Endothelial cell of umbilical vein (primary cell): ENCODE measurements at regions of chr1 and their contacts with region 1.

Region 1: GRCh38 chr1:12407050-12407961 is 177.5 kb downstream of the VPS13D start:
- DNase-seq: peak; percentile 91
- H3K4me3 ChIP-seq: no peak overlapping the region
- H3K27ac ChIP-seq: no peak overlapping the region
- H3K4me1 ChIP-seq: peaks cover 33% of the 10 kb centered on the region
- H3K27me3 ChIP-seq: no peaks in the 10 kb centered on the region
- CTCF ChIP-seq: peak; percentile 23 to 24
- POLR2A ChIP-seq: no peak

Region 2: DNA sequence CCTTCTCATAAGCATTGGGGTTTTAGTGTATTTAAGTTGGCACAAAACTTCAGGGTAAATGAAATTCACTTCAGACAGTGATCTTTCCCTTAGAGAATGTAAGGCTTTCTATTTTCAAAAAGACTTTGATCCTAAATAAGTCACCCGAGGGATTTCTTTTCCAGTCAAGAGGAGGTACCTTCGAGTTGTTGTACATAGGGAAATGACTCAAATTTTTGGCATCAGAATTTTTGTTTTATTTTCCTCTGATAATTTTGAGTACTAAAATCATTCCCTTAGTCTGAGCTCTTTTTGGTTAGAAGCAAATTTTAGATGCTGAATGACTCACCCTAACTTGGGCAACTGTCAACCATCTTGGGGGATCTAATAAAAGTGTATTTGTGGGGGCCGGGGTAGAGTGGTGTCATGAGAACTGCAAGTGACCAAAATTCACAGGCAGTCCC is 16.8 kb after region 1 on chr1:
- CTCF ChIA-PET with region 1: interaction called, 21 read pairs
- POLR2A ChIA-PET with region 1: no interaction called
- dilution Hi-C with region 1: no loop called
- intact Hi-C with region 1: no loop called
- DNase-seq: peak; percentile 58
- H3K4me3 ChIP-seq: no peak overlapping the region
- H3K27ac ChIP-seq: peak overlapping the region; percentile 31
- H3K4me1 ChIP-seq: peaks cover 17% of the 10 kb centered on the region
- H3K27me3 ChIP-seq: no peaks in the 10 kb centered on the region
- CTCF ChIP-seq: no peak
- POLR2A ChIP-seq: no peak

Region 3: GRCh38 chr1:12454406-12455391 is 47.4 kb after region 1 on chr1:
- CTCF ChIA-PET with region 1: interaction called, 5 read pairs
- POLR2A ChIA-PET with region 1: no interaction called
- dilution Hi-C with region 1: no loop called
- intact Hi-C with region 1: loop called (anchors 1 kb)
- DNase-seq: peak; percentile 81
- H3K4me3 ChIP-seq: peak overlapping the region in 1 of 3 experiments; percentile 6
- H3K27ac ChIP-seq: peak overlapping the region; percentile 88
- H3K4me1 ChIP-seq: peaks cover 62% of the 10 kb centered on the region
- H3K27me3 ChIP-seq: no peaks in the 10 kb centered on the region
- CTCF ChIP-seq: no peak
- POLR2A ChIP-seq: no peak

Region 4: GRCh38 chr1:12518931-12519692 is 111.8 kb after region 1 on chr1:
- CTCF ChIA-PET with region 1: interaction called, 4 read pairs
- POLR2A ChIA-PET with region 1: no interaction called
- dilution Hi-C with region 1: no loop called
- intact Hi-C with region 1: loop called (anchors 10 kb)
- DNase-seq: peak; percentile 49
- H3K4me3 ChIP-seq: no peak overlapping the region
- H3K27ac ChIP-seq: no peak overlapping the region
- H3K4me1 ChIP-seq: peaks cover 2% of the 10 kb centered on the region
- H3K27me3 ChIP-seq: no peaks in the 10 kb centered on the region
- CTCF ChIP-seq: no peak
- POLR2A ChIP-seq: no peak

Region 5: DNA sequence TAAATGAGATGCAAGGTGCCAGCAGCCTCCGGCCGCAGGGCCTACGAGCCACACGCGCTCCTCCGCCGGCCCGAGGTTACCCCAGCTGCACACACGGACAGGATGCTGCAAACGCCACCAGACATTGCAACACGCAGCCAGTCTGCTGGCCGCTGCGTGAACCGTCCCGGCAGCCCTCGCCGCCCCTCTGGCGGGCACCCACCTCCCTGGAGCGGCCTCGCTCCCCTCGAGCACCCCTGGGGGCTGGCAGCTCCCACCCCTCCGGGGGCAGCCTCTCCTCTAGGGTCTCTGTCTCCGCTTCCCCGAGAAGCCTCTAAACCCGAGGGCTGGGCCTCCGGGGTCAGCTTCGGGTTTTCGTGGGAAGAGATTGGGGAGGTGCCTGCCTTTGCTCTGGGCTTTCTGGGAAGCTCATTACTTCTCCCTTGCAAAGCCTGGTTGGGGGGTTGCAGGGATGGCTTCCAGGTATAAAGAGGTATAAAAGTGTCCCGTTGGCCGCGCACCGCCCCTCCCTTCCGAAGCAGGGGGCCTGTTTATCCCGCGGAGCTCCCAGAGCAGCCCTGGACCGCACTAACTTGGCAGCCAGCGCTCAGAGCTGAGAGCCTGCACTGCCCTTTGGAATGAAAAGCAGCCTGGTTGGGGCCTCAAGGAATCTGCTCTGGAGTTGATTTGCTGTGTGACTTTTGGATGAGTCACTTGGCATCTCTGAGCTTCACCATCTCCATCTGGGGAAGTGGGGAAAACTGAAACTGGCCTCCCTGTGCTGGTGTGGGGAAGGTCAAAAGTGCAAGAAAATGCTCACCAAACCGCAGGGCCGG is 188.9 kb after region 1 on chr1:
- CTCF ChIA-PET with region 1: interaction called, 5 read pairs
- POLR2A ChIA-PET with region 1: no interaction called
- dilution Hi-C with region 1: no loop called
- intact Hi-C with region 1: loop called (anchors 1 kb)
- DNase-seq: peak; percentile 96
- H3K4me3 ChIP-seq: no peak overlapping the region
- H3K27ac ChIP-seq: peak overlapping the region; percentile 93
- H3K4me1 ChIP-seq: peaks cover 28% of the 10 kb centered on the region
- H3K27me3 ChIP-seq: no peaks in the 10 kb centered on the region
- CTCF ChIP-seq: no peak
- POLR2A ChIP-seq: peak; percentile 12

Region 6: GRCh38 chr1:12658531-12659453 is 251.5 kb after region 1 on chr1:
- CTCF ChIA-PET with region 1: interaction called, 9 read pairs
- POLR2A ChIA-PET with region 1: no interaction called
- dilution Hi-C with region 1: no loop called
- intact Hi-C with region 1: loop called (anchors 2 kb)
- DNase-seq: peak; percentile 84
- H3K4me3 ChIP-seq: no peak overlapping the region
- H3K27ac ChIP-seq: no peak overlapping the region
- H3K4me1 ChIP-seq: no peaks in the 10 kb centered on the region
- H3K27me3 ChIP-seq: peaks cover 0 to 8% of the 10 kb centered on the region in 2 experiments
- CTCF ChIP-seq: peak; percentile 86 to 96
- POLR2A ChIP-seq: no peak

Region 7: DNA sequence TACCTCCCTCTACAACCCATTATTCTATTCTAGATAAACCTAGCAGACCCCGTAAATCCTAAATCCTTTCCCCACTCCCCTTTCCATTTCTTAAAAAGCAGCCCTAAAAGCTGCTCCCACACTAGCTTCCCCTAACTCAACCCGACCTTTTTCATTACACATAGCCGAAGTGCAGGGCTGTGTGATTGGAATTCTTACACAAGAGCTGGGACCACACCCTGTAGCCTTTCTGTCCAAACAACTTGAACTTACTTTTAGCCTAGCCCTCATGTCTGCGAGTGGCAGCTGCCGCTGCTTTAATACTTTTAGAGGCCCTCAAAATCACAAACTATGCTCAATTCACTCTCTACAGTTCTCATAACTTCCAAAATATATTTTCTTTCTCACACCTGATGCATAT is 1156.8 kb after region 1 on chr1:
- CTCF ChIA-PET with region 1: no interaction called
- POLR2A ChIA-PET with region 1: no interaction called
- dilution Hi-C with region 1: no loop called
- intact Hi-C with region 1: no loop called
- DNase-seq: no peak
- H3K4me3 ChIP-seq: no peak overlapping the region
- H3K27ac ChIP-seq: no peak overlapping the region
- H3K4me1 ChIP-seq: no peaks in the 10 kb centered on the region
- H3K27me3 ChIP-seq: no peaks in the 10 kb centered on the region
- CTCF ChIP-seq: no peak
- POLR2A ChIP-seq: no peak